ENCODE measurements at regions of chr3 and their contacts with region 1.

Region 1: DNA sequence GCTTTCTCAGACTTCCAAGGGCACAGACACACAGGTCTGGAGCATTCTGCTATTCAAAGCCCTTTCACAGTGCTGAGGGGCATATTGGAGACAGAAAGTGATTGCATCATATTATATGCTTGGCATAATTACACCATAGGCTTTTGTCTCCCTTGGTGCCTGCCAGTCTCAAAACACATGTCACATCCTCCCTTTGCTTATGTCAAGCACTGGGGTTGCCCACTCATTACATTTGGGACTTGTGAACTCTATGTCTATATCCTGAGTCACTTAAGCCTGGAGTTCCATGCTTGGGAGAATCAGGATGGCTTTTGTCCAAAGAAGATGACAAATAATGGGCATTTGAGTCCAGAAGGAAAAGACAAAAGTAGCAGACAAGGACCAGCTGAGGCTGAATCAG is 12.3 kb upstream of the PDZRN3 start:
- DNase-seq: no peak
- H3K4me3 ChIP-seq: no peak overlapping the region
- CTCF ChIP-seq: no peak

Region 2: GRCh38 chr3:73727117-73727821 is 90.2 kb after region 1 on chr3:
- in situ Hi-C with region 1: loop called (anchors 5 kb)
- DNase-seq: peak; percentile 86
- H3K4me3 ChIP-seq: no peak overlapping the region
- CTCF ChIP-seq: no peak